GM12878 (cell line): ENCODE measurements at regions of chr1 and their contacts with region 1.

Region 1: DNA sequence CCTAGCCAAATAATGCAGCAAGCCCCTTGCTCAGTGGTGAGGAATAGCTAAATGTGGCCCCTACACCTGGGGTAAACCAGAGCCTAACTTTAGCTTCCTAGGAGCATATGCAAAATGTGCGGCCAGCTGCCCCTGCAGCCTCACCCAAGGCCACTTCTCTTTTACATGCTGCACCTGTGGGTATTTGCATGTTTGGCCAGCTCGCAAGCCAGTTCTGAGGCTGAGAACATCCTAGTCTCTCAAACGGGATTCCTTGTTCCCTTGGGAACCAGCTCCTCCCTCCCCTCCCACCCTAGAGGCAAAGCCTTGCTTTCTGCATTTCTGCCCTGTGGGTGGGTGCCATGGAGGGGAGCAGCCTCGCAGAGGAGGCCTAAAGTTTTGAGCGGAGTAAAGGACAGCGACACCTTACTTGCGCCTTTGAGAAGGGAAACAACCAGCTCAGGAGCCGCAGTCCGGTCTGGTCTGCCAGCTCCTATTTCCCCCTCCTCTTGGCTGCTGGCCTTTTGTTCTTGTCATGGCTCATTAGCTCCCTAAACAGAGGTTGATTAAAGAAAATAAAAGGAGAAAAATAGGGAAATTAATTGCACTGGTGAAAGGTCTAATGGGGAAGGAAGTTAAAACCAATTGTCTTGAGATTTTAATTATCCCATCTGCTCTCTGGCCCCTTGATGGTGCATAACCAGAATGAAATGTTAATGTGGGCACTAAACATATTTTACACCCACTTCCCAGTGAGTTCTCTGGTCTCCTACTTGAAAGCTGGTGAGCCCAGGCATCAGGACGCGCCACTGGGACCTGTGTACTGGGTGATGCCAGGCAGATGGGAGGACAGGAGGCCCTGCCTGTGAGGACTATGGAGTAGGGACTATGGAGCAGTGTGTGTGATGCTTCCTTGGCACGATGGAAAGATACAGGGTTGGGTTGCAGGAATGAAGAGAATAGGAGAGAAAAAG is 68.7 kb downstream of the TEX35 start:
- DNase-seq: peak; percentile 72
- ATAC-seq: peak; percentile 84
- H3K4me3 ChIP-seq: peak overlapping the region; percentile 46; the same call in 1 of the 2 replicates
- H3K27ac ChIP-seq: peak overlapping the region; percentile 62
- H3K4me1 ChIP-seq: peaks cover 61% of the 10 kb centered on the region
- H3K27me3 ChIP-seq: no peaks in the 10 kb centered on the region
- CTCF ChIP-seq: no peak
- EP300 ChIP-seq: no peak
- POLR2A ChIP-seq: no peak
- RAD21 ChIP-seq: no peak

Region 2: GRCh38 chr1:178494569-178494971 is 87.1 kb before region 1 on chr1:
- CTCF ChIA-PET with region 1: no interaction called
- POLR2A ChIA-PET with region 1: no interaction called
- RAD21 ChIA-PET with region 1: no interaction called
- SMC1A ChIA-PET with region 1: no interaction called
- in situ Hi-C with region 1: no loop called
- intact Hi-C with region 1: no loop called
- DNase-seq: no peak
- ATAC-seq: no peak
- H3K4me3 ChIP-seq: no peak overlapping the region
- H3K27ac ChIP-seq: no peak overlapping the region
- H3K4me1 ChIP-seq: no peaks in the 10 kb centered on the region
- H3K27me3 ChIP-seq: no peaks in the 10 kb centered on the region
- CTCF ChIP-seq: no peak
- EP300 ChIP-seq: no peak
- POLR2A ChIP-seq: no peak
- RAD21 ChIP-seq: no peak

Region 3: GRCh38 chr1:178599745-178600144 is 18.1 kb after region 1 on chr1:
- CTCF ChIA-PET with region 1: interaction called, 9 read pairs
- POLR2A ChIA-PET with region 1: interaction called, 3 read pairs
- RAD21 ChIA-PET with region 1: interaction called, 17 read pairs
- SMC1A ChIA-PET with region 1: interaction called, 77 read pairs
- in situ Hi-C with region 1: no loop called
- intact Hi-C with region 1: no loop called
- DNase-seq: no peak
- ATAC-seq: peak; percentile 76
- H3K4me3 ChIP-seq: no peak overlapping the region
- H3K27ac ChIP-seq: no peak overlapping the region
- H3K4me1 ChIP-seq: peaks cover 10% of the 10 kb centered on the region
- H3K27me3 ChIP-seq: no peaks in the 10 kb centered on the region
- CTCF ChIP-seq: no peak
- EP300 ChIP-seq: no peak
- POLR2A ChIP-seq: no peak
- RAD21 ChIP-seq: no peak